GM12878 (cell line): ENCODE measurements at regions of chr11 and their contacts with region 1.

Region 1: DNA sequence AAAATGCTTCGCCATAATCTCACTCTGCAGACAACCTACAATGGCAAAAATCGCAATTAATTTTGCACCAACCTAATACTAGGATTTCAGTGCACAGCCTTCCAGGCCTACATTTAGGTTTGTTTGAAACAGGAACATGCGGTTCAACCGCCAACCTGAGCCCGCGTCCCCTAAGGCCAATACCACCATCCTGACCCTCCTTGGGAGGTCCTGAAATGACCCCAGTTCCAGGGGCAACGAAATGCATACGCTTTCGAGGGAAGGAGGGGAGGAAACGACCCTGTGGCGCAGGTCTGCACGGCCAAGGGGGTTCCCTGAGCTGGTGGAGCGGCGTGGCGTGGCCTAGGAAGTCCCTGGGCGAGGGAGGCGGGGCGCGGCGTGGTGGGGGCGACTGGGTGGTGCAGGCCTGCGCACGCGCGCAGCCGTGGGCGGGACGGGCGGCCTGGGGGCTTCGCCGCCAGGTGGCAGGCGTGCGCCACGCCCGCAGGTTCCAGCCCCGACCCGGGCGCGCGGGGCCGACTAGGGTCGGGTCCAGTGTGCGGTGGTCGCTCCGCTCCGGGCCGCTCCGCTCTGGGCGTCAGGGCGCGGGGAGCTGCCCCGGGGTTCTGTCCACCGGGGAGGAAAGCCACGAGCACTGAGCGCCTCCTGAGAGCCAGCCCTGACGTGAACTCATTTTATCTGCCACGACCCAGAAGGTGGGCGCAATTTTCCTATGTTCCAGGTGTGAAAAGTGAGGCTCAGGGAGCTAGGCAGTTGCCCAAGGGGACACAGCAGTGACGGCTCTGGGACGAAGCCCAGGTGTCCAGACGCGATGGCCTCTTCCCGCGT is 94.1 kb downstream of the SWAP70 start:
- DNase-seq: no peak
- ATAC-seq: peak; percentile 86
- H3K4me3 ChIP-seq: peak overlapping the region; percentile 88
- H3K27ac ChIP-seq: peak overlapping the region; percentile 66
- H3K4me1 ChIP-seq: peaks cover 44% of the 10 kb centered on the region
- H3K27me3 ChIP-seq: no peaks in the 10 kb centered on the region
- CTCF ChIP-seq: peak; percentile 70 to 87 (median 83); a peak in 5 of 6 replicates
- EP300 ChIP-seq: peak in 1 of 2 experiments; percentile 58; a peak in 1 of 4 replicates
- POLR2A ChIP-seq: peak; percentile 77
- RAD21 ChIP-seq: peak; percentile 79

Region 2: GRCh38 chr11:9838961-9839360 is 80.9 kb after region 1 on chr11:
- CTCF ChIA-PET with region 1: no interaction called
- POLR2A ChIA-PET with region 1: no interaction called
- RAD21 ChIA-PET with region 1: interaction called, 3 read pairs
- SMC1A ChIA-PET with region 1: no interaction called
- in situ Hi-C with region 1: no loop called
- intact Hi-C with region 1: loop called (anchors 5 kb)
- DNase-seq: peak; percentile 51
- ATAC-seq: peak; percentile 88
- H3K4me3 ChIP-seq: no peak overlapping the region; the same call in 1 of the 2 replicates
- H3K27ac ChIP-seq: no peak overlapping the region
- H3K4me1 ChIP-seq: peaks cover 14% of the 10 kb centered on the region
- H3K27me3 ChIP-seq: no peaks in the 10 kb centered on the region
- CTCF ChIP-seq: no peak
- EP300 ChIP-seq: no peak
- POLR2A ChIP-seq: no peak
- RAD21 ChIP-seq: no peak

Region 3: GRCh38 chr11:9972989-9973388 is 215.0 kb after region 1 on chr11:
- CTCF ChIA-PET with region 1: interaction called, 27 read pairs
- POLR2A ChIA-PET with region 1: no interaction called
- RAD21 ChIA-PET with region 1: interaction called, 21 read pairs
- SMC1A ChIA-PET with region 1: interaction called, 6 read pairs
- in situ Hi-C with region 1: loop called (anchors 5 kb)
- intact Hi-C with region 1: loop called (anchors 1 kb)
- DNase-seq: no peak
- ATAC-seq: peak; percentile 85
- H3K4me3 ChIP-seq: no peak overlapping the region
- H3K27ac ChIP-seq: no peak overlapping the region
- H3K4me1 ChIP-seq: no peaks in the 10 kb centered on the region
- H3K27me3 ChIP-seq: no peaks in the 10 kb centered on the region
- CTCF ChIP-seq: peak; percentile 62 to 75 (median 75)
- EP300 ChIP-seq: no peak
- POLR2A ChIP-seq: no peak
- RAD21 ChIP-seq: peak; percentile 93

Region 4: DNA sequence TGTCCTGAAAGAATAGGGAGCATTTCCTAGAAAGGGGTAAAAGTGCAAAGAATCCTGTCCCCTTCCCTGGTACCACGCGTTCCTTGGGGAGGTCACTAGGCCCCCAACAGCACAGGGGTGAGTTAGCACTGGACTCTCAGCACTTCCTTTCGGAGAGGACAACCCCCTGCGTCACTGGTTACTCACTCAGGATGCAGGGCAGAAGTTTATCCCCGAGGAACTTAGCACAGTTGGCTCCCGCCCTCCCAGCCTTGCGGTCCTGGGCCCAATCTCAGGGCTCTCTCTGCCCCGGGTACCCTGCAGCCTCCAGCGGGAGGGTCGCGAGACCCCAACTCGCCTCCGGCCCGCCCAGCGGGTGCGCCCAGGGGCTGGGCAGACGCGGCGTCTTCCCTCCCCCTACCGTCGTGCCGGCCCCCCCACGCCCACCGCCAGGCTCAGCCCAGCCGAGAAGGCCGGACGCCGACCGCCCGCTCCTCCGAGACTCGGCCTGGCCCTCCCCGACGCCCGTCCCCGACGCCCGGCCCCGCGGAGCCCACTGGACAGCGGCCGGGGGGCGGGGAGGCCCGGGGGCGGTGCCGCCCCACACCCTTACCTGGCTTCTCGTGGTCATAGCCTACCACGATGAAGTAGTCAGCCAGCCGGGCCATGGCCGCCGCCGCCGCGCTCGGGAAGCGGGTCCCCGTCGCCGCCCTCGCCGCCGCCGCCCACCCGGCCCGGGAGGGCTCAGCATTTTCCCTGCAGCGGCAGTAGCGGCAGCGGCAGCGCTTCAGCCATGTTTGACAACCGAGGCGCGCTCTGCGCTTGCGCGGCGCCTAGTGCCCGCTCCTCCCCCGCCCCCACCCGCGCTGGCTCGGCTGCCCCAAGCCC is 535.6 kb after region 1 on chr11 and contains the start of gene SBF2:
- CTCF ChIA-PET with region 1: no interaction called
- POLR2A ChIA-PET with region 1: interaction called, 3 read pairs
- RAD21 ChIA-PET with region 1: no interaction called
- SMC1A ChIA-PET with region 1: no interaction called
- in situ Hi-C with region 1: loop called (anchors 10 kb)
- intact Hi-C with region 1: no loop called
- DNase-seq: no peak
- ATAC-seq: peak; percentile 70
- H3K4me3 ChIP-seq: peak within 1 kb of the TSS; percentile 73
- H3K27ac ChIP-seq: no peak within 1 kb of the TSS
- H3K4me1 ChIP-seq: peaks cover 13% of the 10 kb centered on the region
- H3K27me3 ChIP-seq: peaks cover 8 to 27% of the 10 kb centered on the region in 2 experiments
- CTCF ChIP-seq: no peak
- EP300 ChIP-seq: no peak
- POLR2A ChIP-seq: peak; percentile 42; the same call in 1 of the 2 replicates
- RAD21 ChIP-seq: no peak
- polyA plus RNA-seq, gene SBF2: 0.24 to 0.26 TPM